ENCODE measurements at regions of chr3 and their contacts with region 1.

Region 1: DNA sequence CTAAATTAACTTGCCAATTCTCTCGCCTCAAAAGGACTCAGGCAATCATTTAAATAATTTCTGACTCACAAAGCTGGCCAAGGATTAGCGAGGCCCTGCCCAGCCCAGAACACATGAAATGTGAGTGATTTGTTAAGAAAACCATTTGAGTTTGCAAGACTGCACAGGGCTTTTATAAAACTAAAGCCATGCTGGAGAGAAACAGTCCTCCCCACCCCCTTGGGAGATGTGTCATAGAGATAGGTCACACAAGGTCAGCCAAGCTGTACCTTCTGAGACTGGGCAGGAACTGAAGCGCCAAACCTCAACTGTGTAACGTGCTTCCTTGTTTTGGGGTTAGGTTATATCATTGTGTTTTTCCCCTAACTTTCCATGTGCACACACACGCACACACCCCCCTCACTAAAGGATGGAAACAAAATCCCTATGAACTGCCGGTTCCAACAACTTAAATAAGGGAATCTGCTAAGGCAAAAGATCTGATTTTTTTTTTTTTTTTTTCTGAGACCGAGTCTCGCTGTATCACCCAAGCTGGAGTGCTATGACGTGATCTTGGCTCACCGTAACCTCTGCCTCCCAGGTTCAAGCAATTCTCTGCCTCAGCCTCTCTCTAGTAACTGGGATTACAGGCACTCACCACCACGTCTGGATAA is 8.1 kb downstream of the SPATA12 start:
- DNase-seq: peak; percentile 55
- ATAC-seq: peak; percentile 93

Region 2: DNA sequence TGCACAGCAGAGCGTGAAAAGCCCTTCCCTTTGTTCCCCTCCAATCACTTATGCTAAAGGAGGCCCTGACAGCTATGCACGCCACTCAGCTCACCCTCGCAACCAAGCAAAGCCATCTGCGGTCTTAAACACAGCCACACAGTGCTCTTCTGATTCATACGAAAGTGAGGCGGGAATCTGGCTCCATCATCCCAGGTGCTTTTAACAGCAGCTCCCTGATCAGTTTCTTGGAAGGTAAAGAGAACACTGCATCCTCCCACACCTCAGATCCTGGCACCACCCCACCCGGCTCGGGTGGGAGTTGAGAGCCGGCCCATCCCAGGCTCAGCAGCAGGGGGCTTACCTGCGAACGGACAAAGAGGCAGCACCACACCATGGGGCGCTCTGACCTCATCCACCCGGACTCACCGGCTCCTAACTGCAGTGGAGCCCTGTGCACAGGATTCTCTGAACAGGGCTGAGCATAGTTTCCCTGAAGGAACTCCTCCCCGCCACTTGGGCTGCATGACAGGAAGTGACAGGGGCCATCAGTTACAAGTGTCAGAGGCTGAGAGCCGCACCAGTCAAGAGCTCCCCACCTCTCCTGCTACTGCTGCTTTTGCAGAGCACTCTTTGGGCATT is 152.5 kb before region 1 on chr3:
- intact Hi-C with region 1: no loop called
- DNase-seq: peak; percentile 50
- ATAC-seq: peak; percentile 76

Region 3: GRCh38 chr3:56997675-56998074 is 70.9 kb before region 1 on chr3:
- intact Hi-C with region 1: loop called (anchors 10 kb)
- DNase-seq: no peak
- ATAC-seq: no peak